Ovary (tissue), 10 donors: ENCODE measurements at regions of chr6 and their contacts with region 1.

Region 1: GRCh38 chr6:63764318-63764916 is 128.8 kb downstream of the PHF3 start:
- DNase-seq: no peak
- H3K4me3 ChIP-seq: no peak overlapping the region
- H3K27ac ChIP-seq: no peak overlapping the region
- H3K4me1 ChIP-seq: no peaks in the 10 kb centered on the region
- H3K27me3 ChIP-seq: no peaks in the 10 kb centered on the region
- CTCF ChIP-seq: peak in 1 of 3 donors; percentile 48
- EP300 ChIP-seq: no peak
- POLR2A ChIP-seq: no peak

Region 2: GRCh38 chr6:63352587-63353285 is 411.7 kb before region 1 on chr6:
- intact Hi-C with region 1: loop called in 3 of 4 experiments (anchors 5 kb)
- DNase-seq: peak in 1 of 5 donors; percentile 28
- H3K4me3 ChIP-seq: no peak overlapping the region
- H3K27ac ChIP-seq: no peak overlapping the region
- H3K4me1 ChIP-seq: peaks cover 3% of the 10 kb centered on the region
- H3K27me3 ChIP-seq: no peaks in the 10 kb centered on the region
- CTCF ChIP-seq: peak in 1 of 3 donors; percentile 24
- EP300 ChIP-seq: no peak
- POLR2A ChIP-seq: no peak

Region 3: GRCh38 chr6:63598049-63599036 is 166.1 kb before region 1 on chr6:
- intact Hi-C with region 1: loop called (anchors 5 to 10 kb)
- DNase-seq: peak; percentile 53 to 66 (median 64)
- H3K4me3 ChIP-seq: peak overlapping the region; percentile 33
- H3K27ac ChIP-seq: no peak overlapping the region
- H3K4me1 ChIP-seq: no peaks in the 10 kb centered on the region
- H3K27me3 ChIP-seq: no peaks in the 10 kb centered on the region
- CTCF ChIP-seq: peak; percentile 50 to 87 (median 61)
- EP300 ChIP-seq: no peak
- POLR2A ChIP-seq: no peak

Region 4: GRCh38 chr6:63672582-63673129 is 91.8 kb before region 1 on chr6:
- intact Hi-C with region 1: no loop called
- DNase-seq: no peak
- H3K4me3 ChIP-seq: no peak overlapping the region
- H3K27ac ChIP-seq: no peak overlapping the region
- H3K4me1 ChIP-seq: peaks cover 10% of the 10 kb centered on the region
- H3K27me3 ChIP-seq: no peaks in the 10 kb centered on the region
- CTCF ChIP-seq: no peak
- EP300 ChIP-seq: no peak
- POLR2A ChIP-seq: no peak